ENCODE measurements at regions of chr11 and their contacts with region 1.

Region 1: DNA sequence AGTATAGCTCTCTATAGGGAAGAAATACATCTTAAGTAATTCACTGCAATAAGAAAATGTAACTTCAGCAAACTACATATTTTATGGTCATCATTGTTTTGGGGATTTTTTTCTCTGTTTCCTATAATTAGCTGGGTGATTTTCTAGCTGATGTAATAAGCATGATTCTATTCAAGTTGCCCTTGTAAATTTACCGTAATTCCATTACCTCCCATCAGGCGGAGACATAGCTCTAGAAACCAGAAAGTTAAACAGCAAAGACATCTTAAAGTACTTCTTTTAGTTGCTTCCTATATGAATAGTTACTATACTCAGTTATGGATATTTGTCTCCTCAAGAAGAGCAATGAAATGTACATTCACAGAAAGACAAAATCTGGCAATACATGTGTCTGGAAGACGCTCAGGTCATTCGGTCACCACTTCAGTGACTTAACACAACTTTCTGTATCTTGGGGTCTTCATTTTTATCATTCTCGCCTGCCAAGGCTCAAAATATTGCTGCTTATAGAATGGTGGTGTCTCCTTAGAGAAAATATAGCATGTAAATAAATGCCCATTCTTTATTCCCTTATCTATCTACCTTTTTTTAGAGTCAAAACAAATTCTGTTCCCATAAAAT is 239.9 kb upstream of the ZC3H12C start:
- DNase-seq: no peak
- ATAC-seq: no peak
- H3K4me3 ChIP-seq: no peak overlapping the region
- H3K27ac ChIP-seq: no peak overlapping the region
- H3K4me1 ChIP-seq: no peaks in the 10 kb centered on the region
- H3K27me3 ChIP-seq: no peaks in the 10 kb centered on the region
- CTCF ChIP-seq: peak; percentile 51

Region 2: GRCh38 chr11:109939166-109939810 is 86.0 kb after region 1 on chr11:
- intact Hi-C with region 1: loop called in 1 of 2 experiments (anchors 2 kb)
- DNase-seq: no peak
- ATAC-seq: peak; percentile 70 to 91 (median 84)
- H3K4me3 ChIP-seq: no peak overlapping the region
- H3K27ac ChIP-seq: no peak overlapping the region
- H3K4me1 ChIP-seq: peaks cover 6% of the 10 kb centered on the region
- H3K27me3 ChIP-seq: no peaks in the 10 kb centered on the region
- CTCF ChIP-seq: peak; percentile 61

Region 3: GRCh38 chr11:110000850-110001249 is 147.6 kb after region 1 on chr11:
- intact Hi-C with region 1: no loop called
- DNase-seq: no peak
- ATAC-seq: peak in 2 of 4 donors; percentile 31 to 43
- H3K4me3 ChIP-seq: no peak overlapping the region
- H3K27ac ChIP-seq: peak overlapping the region; percentile 77
- H3K4me1 ChIP-seq: peaks cover 20% of the 10 kb centered on the region
- H3K27me3 ChIP-seq: no peaks in the 10 kb centered on the region
- CTCF ChIP-seq: no peak